Activated CD8-positive, alpha-beta memory T cell treated with anti-CD3 and anti-CD28 coated beads, Interleukin-2, amount 10 ng/mL, durations not matched to agents 7 days and 5 days (primary cell): ENCODE measurements at regions of chr12 and their contacts with region 1.

Region 1: GRCh38 chr12:49342066-49342913 is 4.4 kb upstream of the DNAJC22 start:
- DNase-seq: peak; percentile 85
- ATAC-seq: peak; percentile 80
- H3K4me3 Mint-ChIP-seq: no peak overlapping the region
- H3K27ac Mint-ChIP-seq: no peak overlapping the region
- H3K4me1 Mint-ChIP-seq: peaks cover 34% of the 10 kb centered on the region
- H3K27me3 Mint-ChIP-seq: peaks cover 86% of the 10 kb centered on the region

Region 2: DNA sequence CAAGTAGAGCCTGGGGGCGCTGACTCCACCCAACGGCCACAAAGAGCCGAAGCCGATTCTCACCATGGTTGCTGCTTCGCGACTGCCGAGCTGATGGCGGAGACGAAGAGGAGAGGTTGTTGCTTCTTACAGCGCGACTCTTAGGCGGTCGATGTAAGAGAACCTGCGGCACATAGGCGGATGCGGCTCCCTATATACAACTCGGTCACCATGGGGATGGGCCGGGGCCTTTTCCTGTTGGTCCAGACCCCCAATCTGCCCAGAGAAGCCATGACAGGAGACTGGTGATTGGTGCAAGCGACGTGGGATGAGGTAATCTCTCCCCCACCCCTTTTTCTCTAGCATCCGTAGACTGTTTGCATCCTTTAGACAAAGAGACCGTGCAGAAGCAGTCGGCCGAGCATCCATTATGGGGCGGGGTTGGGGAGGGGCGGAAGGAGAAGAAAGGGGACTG is 153.3 kb before region 1 on chr12 and contains the start of gene TUBA1A:
- CTCF ChIA-PET with region 1: no interaction called
- DNase-seq: peak; percentile 99
- ATAC-seq: peak; percentile 88
- H3K4me3 Mint-ChIP-seq: peak within 1 kb of the TSS; percentile 95
- H3K27ac Mint-ChIP-seq: peak within 1 kb of the TSS; percentile 99
- H3K4me1 Mint-ChIP-seq: peaks cover 21% of the 10 kb centered on the region
- H3K27me3 Mint-ChIP-seq: peaks cover 2% of the 10 kb centered on the region
- total RNA-seq, gene TUBA1A: 91.0 to 96.5 TPM

Region 3: GRCh38 chr12:49288412-49288853 is 53.9 kb before region 1 on chr12:
- CTCF ChIA-PET with region 1: interaction called, 202 read pairs
- DNase-seq: peak; percentile 84
- ATAC-seq: peak; percentile 70
- H3K4me3 Mint-ChIP-seq: no peak overlapping the region
- H3K27ac Mint-ChIP-seq: no peak overlapping the region
- H3K4me1 Mint-ChIP-seq: peaks cover 3% of the 10 kb centered on the region
- H3K27me3 Mint-ChIP-seq: peaks cover 41% of the 10 kb centered on the region

Region 4: DNA sequence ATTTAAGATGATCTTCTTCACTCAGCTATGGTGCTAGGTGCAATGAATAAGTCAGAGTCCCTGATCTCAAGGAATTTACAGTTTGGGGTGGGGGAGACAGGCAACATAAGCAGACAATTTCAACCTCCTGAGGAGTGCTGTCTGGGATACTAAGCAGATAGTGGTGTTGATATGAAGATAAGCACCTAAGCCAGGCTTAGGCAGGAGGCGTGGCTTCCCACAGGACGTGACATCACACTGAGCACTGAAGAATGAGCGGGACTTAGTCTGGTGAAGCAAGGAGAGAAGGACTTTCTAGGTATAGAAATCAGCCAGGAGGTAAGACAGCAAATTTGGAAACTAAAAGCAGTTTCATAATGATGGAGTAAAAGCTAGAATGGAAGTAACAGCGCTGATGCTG is 40.5 kb before region 1 on chr12:
- CTCF ChIA-PET with region 1: interaction called, 202 read pairs
- DNase-seq: peak; percentile 71
- ATAC-seq: peak; percentile 55
- H3K4me3 Mint-ChIP-seq: no peak overlapping the region
- H3K27ac Mint-ChIP-seq: peak overlapping the region; percentile 7
- H3K4me1 Mint-ChIP-seq: peaks cover 20% of the 10 kb centered on the region
- H3K27me3 Mint-ChIP-seq: peaks cover 40% of the 10 kb centered on the region

Region 5: DNA sequence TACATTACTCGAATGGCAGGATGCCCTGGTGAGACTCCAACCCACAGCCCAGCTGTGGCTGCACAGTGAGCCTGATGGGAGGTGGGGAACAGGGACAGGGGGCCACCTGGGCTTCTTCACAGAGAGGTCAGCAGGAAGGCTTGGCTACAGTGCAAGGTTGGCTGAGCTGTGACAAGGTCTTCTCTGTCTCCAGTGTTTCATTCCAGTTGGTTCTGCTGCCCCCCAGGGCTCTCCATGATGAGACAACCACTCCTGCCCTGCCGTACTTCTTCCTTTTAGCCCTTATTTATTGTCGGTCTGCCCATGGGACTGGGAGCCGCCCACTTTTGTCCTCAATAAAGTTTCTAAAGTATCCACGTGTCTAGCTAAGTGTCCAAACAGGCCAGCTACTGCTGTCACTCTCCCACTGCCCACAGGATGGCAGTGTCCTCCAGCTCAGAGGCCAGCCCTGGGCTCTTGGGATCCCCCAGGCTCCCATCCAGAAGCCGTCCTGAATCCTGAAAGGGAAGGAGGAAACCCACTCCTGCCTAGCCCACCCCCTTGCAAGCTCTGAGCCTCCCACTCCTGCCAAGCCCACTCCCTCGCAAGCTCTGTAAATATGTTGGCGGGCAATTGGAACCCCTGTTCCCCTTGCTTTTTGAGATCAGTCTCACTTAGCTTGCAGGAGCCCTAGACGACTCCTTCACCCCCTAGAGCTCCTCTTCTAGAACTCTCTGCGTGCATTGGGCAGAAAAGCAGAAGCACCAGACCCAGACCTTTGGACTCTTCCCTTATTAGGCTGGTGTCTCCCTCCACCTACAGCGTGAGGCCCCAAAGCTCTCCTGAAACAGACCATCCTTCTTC is 10.7 kb before region 1 on chr12:
- CTCF ChIA-PET with region 1: interaction called, 85 read pairs
- DNase-seq: no peak
- ATAC-seq: no peak
- H3K4me3 Mint-ChIP-seq: no peak overlapping the region
- H3K27ac Mint-ChIP-seq: no peak overlapping the region
- H3K4me1 Mint-ChIP-seq: peaks cover 7% of the 10 kb centered on the region
- H3K27me3 Mint-ChIP-seq: peaks cover 32% of the 10 kb centered on the region